B cell (primary cell): ENCODE measurements at regions of chr6 and their contacts with region 1.

Region 1: DNA sequence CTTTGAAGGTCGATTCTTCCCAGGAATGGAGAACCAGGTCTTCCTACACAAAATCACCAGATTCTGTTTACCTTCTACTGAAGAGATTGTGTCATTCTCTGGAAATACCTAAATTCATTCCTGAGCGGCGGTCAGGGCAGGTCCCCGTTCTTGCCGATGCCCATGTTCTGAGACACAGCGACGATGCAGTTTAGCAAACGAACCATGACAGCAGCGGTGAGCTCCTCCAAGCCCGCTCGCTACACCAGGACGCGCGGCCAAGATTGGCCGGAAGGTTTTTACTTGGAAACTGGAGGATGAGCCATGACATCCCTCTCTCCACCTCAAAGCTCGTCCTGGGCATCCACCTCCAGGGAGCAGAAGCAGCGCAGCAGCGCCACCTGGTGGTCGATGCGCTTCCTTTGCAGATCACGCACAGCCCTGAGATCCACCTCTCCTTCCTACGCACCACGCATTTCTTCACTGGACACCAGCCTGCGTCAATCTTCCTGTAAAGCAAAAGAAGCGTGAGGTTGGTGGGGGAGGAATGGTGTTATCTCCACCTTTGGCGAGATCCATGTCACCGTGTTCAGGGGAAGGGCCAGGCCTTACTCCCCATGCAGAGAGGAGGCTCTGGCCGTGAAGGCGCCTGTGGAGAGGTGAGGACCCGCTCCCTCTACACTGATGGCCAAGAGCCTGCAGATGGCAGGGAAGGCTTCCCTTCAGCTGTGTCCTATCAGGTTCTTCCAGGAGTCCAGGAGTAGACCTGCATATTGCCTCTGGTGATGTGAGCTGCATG is 9.9 kb upstream of the HLA-B start:
- DNase-seq: peak; percentile 94
- ATAC-seq: peak; percentile 98
- H3K4me3 ChIP-seq: peak overlapping the region; percentile 17 to 67 (median 56)
- H3K4me3 Mint-ChIP-seq: peak overlapping the region; percentile 90
- H3K27ac ChIP-seq: no peak overlapping the region
- H3K27ac Mint-ChIP-seq: peak overlapping the region; percentile 56
- H3K4me1 ChIP-seq: peaks cover 9 to 10% of the 10 kb centered on the region in 2 donors
- H3K4me1 Mint-ChIP-seq: peaks cover 8% of the 10 kb centered on the region
- H3K27me3 ChIP-seq: peaks cover 0 to 17% (median 10%) of the 10 kb centered on the region in 4 experiments
- H3K27me3 Mint-ChIP-seq: peaks cover 31% of the 10 kb centered on the region
- CTCF ChIP-seq: peak; percentile 88

Region 2: GRCh38 chr6:31135710-31136109 is 231.2 kb before region 1 on chr6:
- CTCF ChIA-PET with region 1: interaction called, 58 read pairs
- POLR2A ChIA-PET with region 1: interaction called, 4 read pairs
- intact Hi-C with region 1: loop called (anchors 1 kb)
- DNase-seq: no peak
- ATAC-seq: no peak
- H3K4me3 ChIP-seq: no peak overlapping the region
- H3K4me3 Mint-ChIP-seq: no peak overlapping the region
- H3K27ac ChIP-seq: no peak overlapping the region
- H3K27ac Mint-ChIP-seq: no peak overlapping the region
- H3K4me1 ChIP-seq: peaks cover 5 to 6% of the 10 kb centered on the region in 2 donors
- H3K4me1 Mint-ChIP-seq: peaks cover 4% of the 10 kb centered on the region
- H3K27me3 ChIP-seq: no peaks in the 10 kb centered on the region
- H3K27me3 Mint-ChIP-seq: peaks cover 4% of the 10 kb centered on the region
- CTCF ChIP-seq: no peak

Region 3: GRCh38 chr6:31158140-31158862 is 208.6 kb before region 1 on chr6 and contains the start of gene TCF19:
- CTCF ChIA-PET with region 1: interaction called, 10 read pairs
- POLR2A ChIA-PET with region 1: interaction called, 3 read pairs
- intact Hi-C with region 1: loop called (anchors 1 kb)
- DNase-seq: peak; percentile 99
- ATAC-seq: peak; percentile 91
- H3K4me3 ChIP-seq: peak within 1 kb of the TSS; percentile 1 to 90 (median 88)
- H3K4me3 Mint-ChIP-seq: peak within 1 kb of the TSS; percentile 87
- H3K27ac ChIP-seq: peak within 1 kb of the TSS; percentile 53 to 77
- H3K27ac Mint-ChIP-seq: peak within 1 kb of the TSS; percentile 73
- H3K4me1 ChIP-seq: peaks cover 13 to 22% of the 10 kb centered on the region in 2 donors
- H3K4me1 Mint-ChIP-seq: peaks cover 32% of the 10 kb centered on the region
- H3K27me3 ChIP-seq: no peaks in the 10 kb centered on the region
- H3K27me3 Mint-ChIP-seq: no peaks in the 10 kb centered on the region
- CTCF ChIP-seq: no peak
- total RNA-seq, gene TCF19: 9.8 and 10.4 TPM in 2 replicates

Region 4: GRCh38 chr6:31203345-31203979 is 163.4 kb before region 1 on chr6:
- CTCF ChIA-PET with region 1: interaction called, 210 read pairs
- POLR2A ChIA-PET with region 1: interaction called, 38 read pairs
- intact Hi-C with region 1: no loop called
- DNase-seq: peak; percentile 86
- ATAC-seq: peak; percentile 55
- H3K4me3 ChIP-seq: peak overlapping the region; percentile 52 to 96 (median 75)
- H3K4me3 Mint-ChIP-seq: peak overlapping the region; percentile 97
- H3K27ac ChIP-seq: peak overlapping the region; percentile 94 to 95
- H3K27ac Mint-ChIP-seq: peak overlapping the region; percentile 97
- H3K4me1 ChIP-seq: peaks cover 21 to 54% of the 10 kb centered on the region in 2 donors
- H3K4me1 Mint-ChIP-seq: peaks cover 50% of the 10 kb centered on the region
- H3K27me3 ChIP-seq: no peaks in the 10 kb centered on the region
- H3K27me3 Mint-ChIP-seq: no peaks in the 10 kb centered on the region
- CTCF ChIP-seq: no peak

Region 5: DNA sequence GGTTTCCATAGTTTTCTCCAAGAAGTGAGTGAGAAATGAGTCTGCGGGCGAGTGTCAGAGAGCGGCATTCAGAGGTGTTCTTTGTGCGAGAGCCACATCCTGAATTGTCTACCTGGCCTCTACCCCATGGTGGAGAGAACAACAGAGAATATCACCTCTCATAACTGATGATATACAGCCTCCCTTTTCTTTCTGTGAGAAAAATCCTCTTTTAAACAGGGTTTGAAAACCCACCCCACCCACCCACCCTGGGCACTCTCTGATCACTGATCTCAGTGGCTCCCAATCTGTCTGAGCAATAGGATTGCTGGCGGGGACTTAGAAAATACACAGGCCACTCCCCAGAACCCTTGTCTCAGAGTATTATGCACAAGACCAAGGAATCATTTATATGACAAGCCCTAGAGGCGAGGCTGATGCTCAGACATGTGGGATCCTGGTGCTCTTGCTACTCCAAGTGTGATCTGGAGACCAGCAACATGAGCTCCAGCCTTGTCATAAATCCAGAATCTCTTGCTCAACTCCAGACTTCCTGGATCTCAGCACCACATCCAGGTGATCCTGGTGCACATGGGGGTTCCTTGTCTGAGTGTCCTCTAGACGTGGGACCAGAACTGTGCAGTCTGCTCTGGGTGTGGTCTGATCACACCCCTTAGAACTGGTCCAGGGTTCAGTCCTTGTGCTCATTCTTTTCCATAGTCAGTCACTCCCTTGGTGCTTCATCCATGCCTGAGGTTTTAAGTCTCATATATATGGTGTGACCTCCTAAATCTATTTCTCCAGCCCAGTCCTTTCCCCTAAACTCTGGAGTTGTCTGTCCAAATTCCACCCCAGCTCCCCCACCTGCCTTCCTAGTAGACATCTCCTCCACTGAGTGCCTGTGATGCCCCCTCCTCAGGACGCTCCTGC is 15.2 kb before region 1 on chr6:
- CTCF ChIA-PET with region 1: interaction called, 21 read pairs
- POLR2A ChIA-PET with region 1: interaction called, 7 read pairs
- intact Hi-C with region 1: no loop called
- DNase-seq: peak; percentile 65
- ATAC-seq: peak; percentile 11
- H3K4me3 ChIP-seq: no peak overlapping the region
- H3K4me3 Mint-ChIP-seq: peak overlapping the region; percentile 99
- H3K27ac ChIP-seq: peak overlapping the region in 1 of 2 donors; percentile 19
- H3K27ac Mint-ChIP-seq: peak overlapping the region; percentile 81
- H3K4me1 ChIP-seq: peaks cover 51 to 57% of the 10 kb centered on the region in 2 donors
- H3K4me1 Mint-ChIP-seq: peaks cover 67% of the 10 kb centered on the region
- H3K27me3 ChIP-seq: no peaks in the 10 kb centered on the region
- H3K27me3 Mint-ChIP-seq: no peaks in the 10 kb centered on the region
- CTCF ChIP-seq: no peak

Region 6: DNA sequence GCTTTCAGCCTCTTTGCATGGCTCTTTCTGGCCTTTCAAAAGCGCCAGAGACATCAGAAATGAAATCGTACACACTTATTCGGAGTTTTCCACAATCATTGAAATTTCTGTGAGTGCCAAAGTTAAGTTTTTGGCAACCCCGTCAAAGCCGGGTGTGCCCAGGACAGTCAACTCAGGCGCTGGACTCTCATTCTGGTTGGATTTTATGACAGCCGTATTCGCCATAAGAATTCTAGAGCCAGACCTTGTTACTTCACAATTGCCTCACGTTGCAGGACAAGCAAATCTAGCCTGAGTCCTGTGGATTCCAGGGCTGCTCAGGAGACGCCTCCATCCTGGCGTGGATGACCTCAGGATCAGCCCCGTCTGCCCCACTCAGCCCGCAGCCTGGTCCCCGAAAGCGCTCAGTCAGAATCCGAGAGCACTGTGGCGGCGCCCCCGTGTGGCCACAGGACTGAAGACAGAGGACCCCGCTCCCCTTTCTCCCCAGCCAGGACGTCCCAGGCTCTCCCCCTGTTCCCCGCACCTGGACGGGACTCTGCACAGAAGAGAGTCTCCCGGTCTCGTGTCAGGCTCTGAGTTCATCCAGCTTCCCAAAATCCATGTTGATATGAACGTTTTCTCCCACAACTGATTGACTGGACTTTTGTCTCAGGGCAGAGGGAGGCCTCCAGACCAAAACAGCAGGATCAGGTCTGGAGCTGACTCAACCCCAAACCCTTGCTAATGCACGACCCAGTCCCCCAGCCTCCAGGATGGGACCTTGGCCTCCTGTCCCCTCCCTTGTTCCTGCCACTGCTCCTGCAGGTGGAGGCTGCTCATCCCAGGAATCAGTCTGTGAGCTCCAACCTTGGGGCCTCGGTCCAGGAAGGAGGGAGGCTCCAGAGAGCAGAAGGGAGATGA is 74.7 kb after region 1 on chr6:
- CTCF ChIA-PET with region 1: interaction called, 8 read pairs
- POLR2A ChIA-PET with region 1: no interaction called
- intact Hi-C with region 1: loop called (anchors 2 kb)
- DNase-seq: peak; percentile 81
- ATAC-seq: peak; percentile 95
- H3K4me3 ChIP-seq: no peak overlapping the region
- H3K4me3 Mint-ChIP-seq: no peak overlapping the region
- H3K27ac ChIP-seq: no peak overlapping the region
- H3K27ac Mint-ChIP-seq: peak overlapping the region; percentile 20
- H3K4me1 ChIP-seq: peaks cover 3 to 4% of the 10 kb centered on the region in 2 donors
- H3K4me1 Mint-ChIP-seq: peaks cover 17% of the 10 kb centered on the region
- H3K27me3 ChIP-seq: peaks cover 0 to 18% (median 16%) of the 10 kb centered on the region in 4 experiments
- H3K27me3 Mint-ChIP-seq: peaks cover 47% of the 10 kb centered on the region
- CTCF ChIP-seq: peak; percentile 87

Region 7: DNA sequence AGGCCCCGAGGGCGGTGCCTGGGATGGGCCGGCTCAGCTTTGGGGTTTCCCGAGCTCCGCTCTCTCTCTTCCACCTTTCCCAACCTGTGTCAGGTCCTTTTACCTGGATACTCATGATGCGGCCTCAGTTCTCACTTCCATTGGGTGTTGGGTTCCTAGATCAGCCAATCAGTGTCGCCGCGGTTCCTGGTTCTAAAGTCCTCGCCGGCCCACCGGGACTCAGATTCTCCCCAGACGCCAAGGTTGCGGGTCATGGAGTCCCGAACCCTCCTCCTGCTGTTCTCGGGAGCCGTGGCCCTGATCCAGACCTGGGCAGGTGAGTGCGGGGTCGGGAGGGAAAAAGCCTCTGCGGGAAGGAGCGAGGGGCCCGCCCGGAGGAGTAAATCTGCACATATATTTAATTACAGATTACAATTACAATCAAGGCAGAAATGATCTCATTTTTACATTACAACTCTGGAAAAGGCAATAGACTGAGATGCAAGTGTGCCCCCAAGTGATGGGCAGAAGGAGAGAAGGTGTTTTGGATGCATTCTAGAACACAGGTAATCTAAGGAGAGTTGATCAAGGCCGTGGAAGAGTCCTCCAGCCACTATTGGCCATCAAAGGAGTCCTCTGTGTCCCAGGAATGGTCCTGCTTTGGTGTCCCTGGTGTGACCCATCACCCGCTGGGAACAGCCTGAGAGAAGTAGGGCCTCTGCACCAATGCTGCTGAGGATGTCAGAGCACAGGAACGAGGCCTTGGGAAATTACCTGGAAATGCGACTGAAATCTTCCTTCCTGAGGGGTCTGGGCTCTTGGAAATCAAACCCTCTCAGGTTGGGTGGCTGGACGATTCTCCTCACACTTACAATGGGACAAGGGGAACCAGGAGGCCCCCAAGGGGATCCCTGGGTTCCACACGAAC is 96.3 kb after region 1 on chr6:
- CTCF ChIA-PET with region 1: no interaction called
- POLR2A ChIA-PET with region 1: no interaction called
- intact Hi-C with region 1: no loop called
- DNase-seq: peak; percentile 97
- ATAC-seq: peak; percentile 96
- H3K4me3 ChIP-seq: peak overlapping the region; percentile 73 to 99 (median 84)
- H3K4me3 Mint-ChIP-seq: peak overlapping the region; percentile 99
- H3K27ac ChIP-seq: peak overlapping the region; percentile 99
- H3K27ac Mint-ChIP-seq: peak overlapping the region; percentile 98
- H3K4me1 ChIP-seq: peaks cover 51 to 55% of the 10 kb centered on the region in 2 donors
- H3K4me1 Mint-ChIP-seq: peaks cover 66% of the 10 kb centered on the region
- H3K27me3 ChIP-seq: peaks cover 0 to 4% (median 0%) of the 10 kb centered on the region in 4 experiments
- H3K27me3 Mint-ChIP-seq: no peaks in the 10 kb centered on the region
- CTCF ChIP-seq: no peak